Cardiac septum (tissue), 1 donor: ENCODE measurements at regions of chr7 and their contacts with region 1.

Region 1: GRCh38 chr7:28408960-28409715 is 3.2 kb upstream of the CREB5 start:
- DNase-seq: peak; percentile 96

Region 2: GRCh38 chr7:28533731-28534531 is 124.8 kb after region 1 on chr7:
- intact Hi-C with region 1: loop called (anchors 5 kb)
- DNase-seq: no peak

Region 3: DNA sequence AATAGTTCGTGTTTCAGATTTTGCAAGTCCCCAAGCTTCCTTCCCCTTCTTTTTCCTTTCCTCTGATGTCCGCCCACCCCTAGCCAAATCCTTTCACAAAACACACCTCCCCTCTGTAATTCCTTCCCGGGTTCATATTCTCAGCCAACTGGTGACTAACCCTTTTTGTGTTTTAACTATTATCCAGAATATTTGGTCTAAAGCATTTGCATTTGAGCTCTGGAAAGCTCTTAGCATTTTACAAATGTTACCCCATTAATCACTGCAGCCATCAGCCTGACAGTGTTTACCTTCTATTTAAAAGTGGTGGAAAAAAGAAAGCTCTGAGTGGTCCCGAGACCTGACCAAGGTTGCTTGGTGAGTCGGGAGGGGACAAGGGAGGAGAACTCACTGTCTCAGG is 142.2 kb after region 1 on chr7:
- intact Hi-C with region 1: no loop called
- DNase-seq: no peak

Region 4: GRCh38 chr7:28685644-28686417 is 276.7 kb after region 1 on chr7:
- intact Hi-C with region 1: loop called (anchors 2 kb)
- DNase-seq: peak; percentile 95